Endothelial cell of umbilical vein (primary cell): ENCODE measurements at regions of chr4 and their contacts with region 1.

Region 1: DNA sequence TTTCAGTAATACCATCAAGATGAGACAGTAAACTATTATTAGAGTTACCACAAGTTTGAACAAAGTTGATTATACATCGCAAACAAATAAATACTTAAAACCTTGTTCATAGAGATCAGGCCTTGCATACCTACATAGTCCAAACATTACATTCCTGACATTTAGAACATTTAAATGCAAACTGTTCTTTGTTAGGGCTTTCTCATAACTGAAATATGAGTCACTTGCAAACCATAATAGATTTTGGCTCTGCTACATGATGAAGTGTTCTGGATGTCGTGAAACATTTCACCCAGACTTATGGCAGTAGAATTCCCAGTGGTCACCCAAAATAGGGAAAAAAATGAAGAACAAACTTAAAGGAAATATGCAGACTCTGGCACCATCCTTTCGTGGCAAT is 75.0 kb downstream of the FAT4 start:
- DNase-seq: peak; percentile 83
- H3K4me3 ChIP-seq: peak overlapping the region in 1 of 3 experiments; percentile 3
- H3K27ac ChIP-seq: peak overlapping the region; percentile 60
- H3K4me1 ChIP-seq: peaks cover 38% of the 10 kb centered on the region
- H3K27me3 ChIP-seq: no peaks in the 10 kb centered on the region
- CTCF ChIP-seq: no peak
- POLR2A ChIP-seq: no peak

Region 2: DNA sequence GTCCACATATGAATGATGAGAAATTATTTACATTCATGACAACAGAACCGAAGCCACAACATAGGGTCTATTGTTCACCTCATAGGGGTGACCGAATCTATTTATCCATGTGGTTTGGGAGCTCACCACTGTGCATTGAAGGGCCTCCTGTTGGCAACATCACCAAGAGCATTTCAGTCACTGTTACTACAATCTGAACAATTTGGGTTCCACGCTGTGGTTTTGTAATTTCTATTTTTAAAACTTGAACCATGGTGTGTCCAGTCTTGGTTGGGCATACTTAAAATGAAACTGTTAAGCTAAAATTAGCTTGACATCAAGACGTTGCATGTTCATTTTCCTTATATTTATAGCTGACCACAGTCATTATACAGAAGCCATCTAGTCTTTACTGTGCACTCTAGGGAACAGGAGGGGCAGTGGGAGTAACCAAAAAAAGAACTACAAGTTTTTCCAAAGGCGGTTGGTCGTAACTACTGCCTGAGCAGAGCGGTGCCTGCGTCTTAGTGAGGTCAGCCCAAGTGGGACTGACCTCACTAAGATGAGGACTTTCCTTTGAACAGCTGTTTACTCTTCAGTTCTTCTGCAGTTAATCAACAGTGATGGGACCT is 1801.0 kb before region 1 on chr4:
- CTCF ChIA-PET with region 1: no interaction called
- POLR2A ChIA-PET with region 1: no interaction called
- dilution Hi-C with region 1: no loop called
- intact Hi-C with region 1: no loop called
- DNase-seq: no peak
- H3K4me3 ChIP-seq: no peak overlapping the region
- H3K27ac ChIP-seq: no peak overlapping the region
- H3K4me1 ChIP-seq: peaks cover 14% of the 10 kb centered on the region
- H3K27me3 ChIP-seq: no peaks in the 10 kb centered on the region
- CTCF ChIP-seq: no peak
- POLR2A ChIP-seq: no peak

Region 3: DNA sequence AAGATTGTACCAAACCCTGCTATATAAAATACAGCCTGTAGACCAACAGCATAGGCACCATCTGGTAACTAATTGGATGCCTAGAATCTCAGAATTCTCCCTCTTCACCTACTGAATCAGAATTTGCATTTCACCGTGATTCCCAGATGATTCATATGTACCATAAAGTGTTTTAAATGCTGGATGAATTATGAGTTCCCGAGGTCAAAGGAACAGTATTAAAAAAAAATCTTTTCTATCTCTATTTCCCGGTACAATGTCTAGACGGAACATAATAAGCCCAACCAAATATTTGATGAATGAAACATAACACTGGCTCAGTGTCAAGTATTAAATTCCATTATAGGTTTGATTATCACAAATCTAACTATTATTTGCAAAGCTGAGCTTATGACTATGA is 957.2 kb before region 1 on chr4:
- CTCF ChIA-PET with region 1: no interaction called
- POLR2A ChIA-PET with region 1: no interaction called
- dilution Hi-C with region 1: no loop called
- intact Hi-C with region 1: loop called (anchors 10 kb)
- DNase-seq: peak; percentile 94
- H3K4me3 ChIP-seq: peak overlapping the region in 1 of 3 experiments; percentile 24
- H3K27ac ChIP-seq: peak overlapping the region; percentile 100
- H3K4me1 ChIP-seq: peaks cover 75% of the 10 kb centered on the region
- H3K27me3 ChIP-seq: no peaks in the 10 kb centered on the region
- CTCF ChIP-seq: no peak
- POLR2A ChIP-seq: no peak

Region 4: GRCh38 chr4:125323654-125324053 is 66.1 kb before region 1 on chr4:
- CTCF ChIA-PET with region 1: interaction called, 3 read pairs
- POLR2A ChIA-PET with region 1: no interaction called
- dilution Hi-C with region 1: no loop called
- intact Hi-C with region 1: loop called (anchors 1 kb)
- DNase-seq: peak; percentile 88
- H3K4me3 ChIP-seq: peak overlapping the region in 2 of 3 experiments; percentile 5 to 46
- H3K27ac ChIP-seq: peak overlapping the region; percentile 56
- H3K4me1 ChIP-seq: peaks cover 56% of the 10 kb centered on the region
- H3K27me3 ChIP-seq: no peaks in the 10 kb centered on the region
- CTCF ChIP-seq: no peak
- POLR2A ChIP-seq: no peak

Region 5: GRCh38 chr4:125368671-125369081 is 21.0 kb before region 1 on chr4:
- CTCF ChIA-PET with region 1: interaction called, 3 read pairs
- POLR2A ChIA-PET with region 1: interaction called, 3 read pairs
- dilution Hi-C with region 1: no loop called
- intact Hi-C with region 1: loop called (anchors 1 kb)
- DNase-seq: peak; percentile 84
- H3K4me3 ChIP-seq: peak overlapping the region; percentile 21 to 73 (median 32)
- H3K27ac ChIP-seq: peak overlapping the region; percentile 74
- H3K4me1 ChIP-seq: peaks cover 19% of the 10 kb centered on the region
- H3K27me3 ChIP-seq: no peaks in the 10 kb centered on the region
- CTCF ChIP-seq: no peak
- POLR2A ChIP-seq: no peak

Region 6: DNA sequence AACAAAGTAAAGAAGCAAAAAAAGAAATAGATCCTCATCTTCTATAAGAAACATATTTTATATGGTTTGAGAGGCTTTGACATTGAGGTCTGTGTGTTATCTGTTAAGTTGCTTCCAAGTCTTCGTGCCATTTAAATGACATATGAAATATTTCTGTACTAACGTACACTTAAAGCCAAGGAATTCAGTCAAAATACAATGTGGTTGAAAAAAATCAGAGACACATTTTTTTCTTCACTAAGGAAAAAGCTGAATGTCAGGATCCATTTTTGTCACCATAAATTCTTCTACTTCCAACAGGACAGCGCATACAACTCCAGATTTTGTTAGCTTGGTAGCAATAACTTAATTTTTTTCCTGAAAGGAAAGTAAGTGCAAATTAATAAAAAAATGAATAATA is 93.6 kb after region 1 on chr4:
- CTCF ChIA-PET with region 1: no interaction called
- POLR2A ChIA-PET with region 1: no interaction called
- dilution Hi-C with region 1: no loop called
- intact Hi-C with region 1: loop called (anchors 5 kb)
- DNase-seq: no peak
- H3K4me3 ChIP-seq: no peak overlapping the region
- H3K27ac ChIP-seq: no peak overlapping the region
- H3K4me1 ChIP-seq: no peaks in the 10 kb centered on the region
- H3K27me3 ChIP-seq: no peaks in the 10 kb centered on the region
- CTCF ChIP-seq: no peak
- POLR2A ChIP-seq: no peak

Region 7: GRCh38 chr4:125520258-125520990 is 130.7 kb after region 1 on chr4:
- CTCF ChIA-PET with region 1: no interaction called
- POLR2A ChIA-PET with region 1: no interaction called
- dilution Hi-C with region 1: no loop called
- intact Hi-C with region 1: loop called (anchors 2 kb)
- DNase-seq: peak; percentile 91
- H3K4me3 ChIP-seq: no peak overlapping the region
- H3K27ac ChIP-seq: peak overlapping the region; percentile 34
- H3K4me1 ChIP-seq: peaks cover 25% of the 10 kb centered on the region
- H3K27me3 ChIP-seq: no peaks in the 10 kb centered on the region
- CTCF ChIP-seq: no peak
- POLR2A ChIP-seq: peak; percentile 73

Region 8: DNA sequence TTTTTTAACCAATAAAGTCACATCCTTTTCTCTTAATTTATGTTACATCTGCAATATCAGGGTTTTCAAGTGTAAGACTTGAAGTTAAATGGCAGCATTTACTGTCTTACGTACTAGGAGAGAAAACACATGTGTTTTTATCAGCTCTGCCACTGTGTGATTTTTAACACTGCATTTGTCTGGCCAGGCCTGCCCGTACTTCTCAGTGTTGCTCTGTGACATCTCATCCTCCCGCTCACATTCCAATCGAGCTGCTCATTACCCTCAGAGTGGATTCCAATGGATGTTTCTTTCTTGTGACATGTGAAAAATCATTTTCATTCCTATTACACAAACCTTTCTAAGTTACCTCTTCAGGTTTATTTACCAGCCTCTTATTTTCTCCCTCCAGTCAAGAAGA is 345.4 kb after region 1 on chr4:
- CTCF ChIA-PET with region 1: interaction called, 3 read pairs
- POLR2A ChIA-PET with region 1: no interaction called
- dilution Hi-C with region 1: no loop called
- intact Hi-C with region 1: loop called (anchors 1 kb)
- DNase-seq: peak; percentile 84
- H3K4me3 ChIP-seq: no peak overlapping the region
- H3K27ac ChIP-seq: peak overlapping the region; percentile 91
- H3K4me1 ChIP-seq: peaks cover 41% of the 10 kb centered on the region
- H3K27me3 ChIP-seq: no peaks in the 10 kb centered on the region
- CTCF ChIP-seq: no peak
- POLR2A ChIP-seq: no peak